CD4-positive, alpha-beta T cell (primary cell): ENCODE measurements at regions of chr1 and their contacts with region 1.

Region 1: GRCh38 chr1:67149179-67149770 is 14.5 kb upstream of the C1orf141 start:
- DNase-seq: peak; percentile 32 to 83 (median 56)
- ATAC-seq: peak; percentile 93
- H3K4me3 ChIP-seq: no peak overlapping the region
- H3K4me3 Mint-ChIP-seq: no peak overlapping the region
- H3K27ac ChIP-seq: no peak overlapping the region
- H3K27ac Mint-ChIP-seq: no peak overlapping the region
- H3K4me1 ChIP-seq: peaks cover 9% of the 10 kb centered on the region
- H3K4me1 Mint-ChIP-seq: peaks cover 31% of the 10 kb centered on the region
- H3K27me3 ChIP-seq: no peaks in the 10 kb centered on the region
- H3K27me3 Mint-ChIP-seq: no peaks in the 10 kb centered on the region
- CTCF ChIP-seq: peak; percentile 85

Region 2: GRCh38 chr1:66996018-66996682 is 153.1 kb before region 1 on chr1:
- CTCF ChIA-PET with region 1: interaction called, 22 read pairs
- POLR2A ChIA-PET with region 1: interaction called, 13 read pairs
- intact Hi-C with region 1: loop called (anchors 1 kb)
- DNase-seq: peak; percentile 32 to 78 (median 52)
- ATAC-seq: peak; percentile 89
- H3K4me3 ChIP-seq: no peak overlapping the region
- H3K4me3 Mint-ChIP-seq: no peak overlapping the region
- H3K27ac ChIP-seq: no peak overlapping the region
- H3K27ac Mint-ChIP-seq: peak overlapping the region; percentile 2
- H3K4me1 ChIP-seq: peaks cover 5% of the 10 kb centered on the region
- H3K4me1 Mint-ChIP-seq: peaks cover 28% of the 10 kb centered on the region
- H3K27me3 ChIP-seq: no peaks in the 10 kb centered on the region
- H3K27me3 Mint-ChIP-seq: no peaks in the 10 kb centered on the region
- CTCF ChIP-seq: peak; percentile 73

Region 3: DNA sequence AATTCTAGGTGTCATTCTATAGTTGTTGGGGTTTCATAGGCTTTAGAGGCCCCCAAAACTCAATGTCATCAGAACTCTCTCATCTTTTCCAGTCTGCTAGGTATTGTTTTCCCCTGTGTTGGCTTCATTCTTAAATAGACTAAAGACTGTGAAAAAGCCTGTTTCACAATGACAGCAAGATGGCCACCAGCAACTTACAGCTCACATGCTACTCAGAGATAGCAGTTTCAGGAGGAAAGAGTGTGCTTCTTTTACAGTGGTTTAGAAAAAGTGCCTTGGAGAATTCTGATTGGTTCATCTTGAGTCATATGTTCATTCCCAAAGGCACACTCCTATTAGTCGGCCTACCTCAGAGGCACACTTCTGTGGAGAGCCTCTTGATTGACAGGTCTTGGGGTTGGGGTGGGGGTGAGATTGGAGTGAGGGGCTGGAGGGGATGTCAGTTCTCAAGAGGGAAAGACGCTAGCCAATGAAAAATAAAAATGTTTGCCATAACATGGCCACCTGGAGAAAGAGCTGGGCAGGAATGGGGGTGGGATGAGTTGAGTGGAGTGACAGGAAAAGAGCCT is 25.5 kb after region 1 on chr1:
- CTCF ChIA-PET with region 1: interaction called, 8 read pairs
- POLR2A ChIA-PET with region 1: interaction called, 15 read pairs
- intact Hi-C with region 1: no loop called
- DNase-seq: no peak
- ATAC-seq: no peak
- H3K4me3 ChIP-seq: no peak overlapping the region
- H3K4me3 Mint-ChIP-seq: no peak overlapping the region
- H3K27ac ChIP-seq: no peak overlapping the region
- H3K27ac Mint-ChIP-seq: no peak overlapping the region
- H3K4me1 ChIP-seq: peaks cover 13% of the 10 kb centered on the region
- H3K4me1 Mint-ChIP-seq: peaks cover 58% of the 10 kb centered on the region
- H3K27me3 ChIP-seq: no peaks in the 10 kb centered on the region
- H3K27me3 Mint-ChIP-seq: no peaks in the 10 kb centered on the region
- CTCF ChIP-seq: no peak

Region 4: GRCh38 chr1:67367370-67368045 is 218.2 kb after region 1 on chr1:
- CTCF ChIA-PET with region 1: no interaction called
- POLR2A ChIA-PET with region 1: no interaction called
- intact Hi-C with region 1: no loop called
- DNase-seq: no peak
- ATAC-seq: no peak
- H3K4me3 ChIP-seq: no peak overlapping the region
- H3K4me3 Mint-ChIP-seq: no peak overlapping the region
- H3K27ac ChIP-seq: no peak overlapping the region
- H3K27ac Mint-ChIP-seq: no peak overlapping the region
- H3K4me1 ChIP-seq: no peaks in the 10 kb centered on the region
- H3K4me1 Mint-ChIP-seq: no peaks in the 10 kb centered on the region
- H3K27me3 ChIP-seq: no peaks in the 10 kb centered on the region
- H3K27me3 Mint-ChIP-seq: no peaks in the 10 kb centered on the region
- CTCF ChIP-seq: no peak